Naive thymus-derived CD4-positive, alpha-beta T cell (primary cell): ENCODE measurements at regions of chr4 and their contacts with region 1.

Region 1: DNA sequence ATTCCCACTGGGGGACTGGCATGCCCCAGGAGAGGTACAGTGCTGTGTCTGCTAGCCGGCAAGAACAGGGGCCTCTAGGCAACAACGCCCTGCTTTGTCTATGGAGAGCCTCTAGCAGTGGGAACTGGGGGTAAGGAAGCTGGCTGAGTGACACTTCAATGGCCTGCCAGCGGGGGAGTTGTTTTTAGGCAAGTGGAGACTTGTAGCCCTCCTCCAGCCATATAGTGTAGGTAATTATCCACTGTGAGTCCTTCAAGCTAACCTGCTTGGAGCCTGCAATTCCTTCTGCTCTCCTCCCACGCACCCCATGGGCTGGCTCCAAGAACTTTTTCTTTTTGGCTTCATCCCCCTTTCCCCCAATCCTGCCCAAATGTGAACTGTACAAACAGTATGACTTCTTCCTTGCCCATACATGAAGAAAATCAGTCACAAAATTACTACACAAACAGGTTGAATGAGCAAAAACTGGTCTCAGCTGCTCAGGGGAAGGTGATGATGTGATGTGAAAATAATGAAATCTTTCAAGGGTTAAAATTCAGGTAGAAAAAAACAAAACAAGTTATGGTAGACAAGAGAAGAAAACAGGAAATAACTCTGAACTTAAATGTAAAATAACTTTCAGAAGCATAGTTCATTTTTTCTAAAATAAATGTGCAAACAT is 33.1 kb downstream of the LEF1 start:
- DNase-seq: no peak
- ATAC-seq: peak; percentile 2
- H3K4me3 ChIP-seq: peak overlapping the region; percentile 27
- H3K4me3 Mint-ChIP-seq: peak overlapping the region; percentile 70 to 92 (median 82)
- H3K27ac ChIP-seq: peak overlapping the region; percentile 69
- H3K27ac Mint-ChIP-seq: peak overlapping the region; percentile 79 to 98 (median 90)
- H3K4me1 ChIP-seq: peaks cover 13 to 94% of the 10 kb centered on the region in 2 donors
- H3K4me1 Mint-ChIP-seq: peaks cover 57 to 99% (median 90%) of the 10 kb centered on the region in 7 donors
- H3K27me3 ChIP-seq: no peaks in the 10 kb centered on the region
- H3K27me3 Mint-ChIP-seq: no peaks in the 10 kb centered on the region

Region 2: DNA sequence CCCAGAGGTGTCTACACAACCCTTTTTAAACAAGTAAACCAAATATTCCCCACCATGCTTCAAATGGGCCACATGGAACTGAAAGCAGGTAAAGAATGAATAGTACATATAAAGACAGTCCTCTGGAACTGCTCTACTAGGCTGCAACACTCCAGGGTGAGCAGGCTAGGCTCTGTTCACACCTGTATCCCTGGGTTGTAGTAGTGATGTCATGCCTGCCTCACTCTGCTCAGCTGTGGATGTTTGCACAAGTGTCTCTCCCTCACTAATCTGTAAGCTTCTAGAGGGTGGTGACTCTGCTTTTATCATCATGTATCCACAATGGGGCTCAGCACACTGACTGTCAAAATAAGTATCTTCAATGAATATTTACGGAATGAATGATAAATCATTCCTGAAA is 12.6 kb after region 1 on chr4:
- CTCF ChIA-PET with region 1: interaction called, 6 read pairs
- POLR2A ChIA-PET with region 1: interaction called, 24 read pairs
- intact Hi-C with region 1: loop called (anchors 1 kb)
- DNase-seq: peak in 5 of 9 donors; percentile 44 to 82 (median 47)
- ATAC-seq: peak; percentile 74
- H3K4me3 ChIP-seq: peak overlapping the region; percentile 32
- H3K4me3 Mint-ChIP-seq: peak overlapping the region; percentile 41 to 86 (median 80)
- H3K27ac ChIP-seq: peak overlapping the region; percentile 81
- H3K27ac Mint-ChIP-seq: peak overlapping the region; percentile 36 to 97 (median 92)
- H3K4me1 ChIP-seq: peaks cover 25 to 91% of the 10 kb centered on the region in 2 donors
- H3K4me1 Mint-ChIP-seq: peaks cover 56 to 94% (median 93%) of the 10 kb centered on the region in 7 donors
- H3K27me3 ChIP-seq: no peaks in the 10 kb centered on the region
- H3K27me3 Mint-ChIP-seq: no peaks in the 10 kb centered on the region

Region 3: DNA sequence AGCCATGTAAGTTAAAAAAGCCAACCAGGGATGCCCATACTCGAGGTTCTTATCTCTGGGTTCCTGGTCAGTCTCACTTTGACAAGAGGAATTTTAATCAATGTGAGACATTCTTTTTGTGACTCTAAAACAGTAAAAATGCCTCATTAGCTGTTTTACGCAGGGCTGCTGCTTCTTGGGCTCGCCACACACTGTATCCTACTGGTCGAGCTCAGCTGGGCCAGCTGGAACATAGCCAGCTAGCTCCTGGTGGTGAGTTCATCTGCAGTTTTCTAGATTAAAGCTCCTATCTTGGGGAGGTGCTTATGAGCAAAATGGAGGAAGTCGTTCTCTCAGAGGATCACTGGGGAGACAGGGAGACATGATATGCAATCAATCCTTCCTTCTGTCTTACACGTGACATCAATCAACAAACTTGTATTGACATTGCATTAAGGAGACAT is 89.0 kb after region 1 on chr4:
- CTCF ChIA-PET with region 1: no interaction called
- POLR2A ChIA-PET with region 1: no interaction called
- intact Hi-C with region 1: no loop called
- DNase-seq: no peak
- ATAC-seq: no peak
- H3K4me3 ChIP-seq: no peak overlapping the region
- H3K4me3 Mint-ChIP-seq: no peak overlapping the region
- H3K27ac ChIP-seq: no peak overlapping the region
- H3K27ac Mint-ChIP-seq: no peak overlapping the region
- H3K4me1 ChIP-seq: no peaks in the 10 kb centered on the region
- H3K4me1 Mint-ChIP-seq: peaks cover 0 to 7% (median 5%) of the 10 kb centered on the region in 7 donors
- H3K27me3 ChIP-seq: no peaks in the 10 kb centered on the region
- H3K27me3 Mint-ChIP-seq: no peaks in the 10 kb centered on the region